Endothelial cell of umbilical vein (primary cell): ENCODE measurements at regions of chr1 and their contacts with region 1.

Region 1: DNA sequence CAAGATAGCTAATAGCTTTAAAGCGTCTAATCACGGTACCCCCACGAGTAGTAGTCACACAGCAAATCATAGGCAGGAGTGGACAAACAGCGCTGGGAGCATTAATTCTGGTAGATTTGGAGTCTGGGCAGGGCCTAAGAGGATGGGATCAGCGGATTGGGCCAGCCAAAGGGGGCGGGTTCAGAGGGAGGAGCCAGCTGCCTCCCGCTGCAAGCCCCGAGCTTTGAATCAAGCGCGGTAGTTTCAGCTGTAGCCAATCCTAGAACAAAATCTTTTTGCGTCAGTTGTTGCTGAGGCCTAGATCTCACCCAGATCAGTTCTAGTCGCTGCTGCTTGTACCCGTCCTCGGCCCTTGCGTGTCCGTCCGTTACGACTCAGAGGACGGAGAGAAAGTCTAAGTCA is 576 bp upstream of the NASP start:
- DNase-seq: peak; percentile 99
- H3K4me3 ChIP-seq: peak overlapping the region; percentile 62 to 81 (median 67)
- H3K27ac ChIP-seq: peak overlapping the region; percentile 78
- H3K4me1 ChIP-seq: peaks cover 17% of the 10 kb centered on the region
- H3K27me3 ChIP-seq: no peaks in the 10 kb centered on the region
- CTCF ChIP-seq: no peak
- POLR2A ChIP-seq: no peak

Region 2: DNA sequence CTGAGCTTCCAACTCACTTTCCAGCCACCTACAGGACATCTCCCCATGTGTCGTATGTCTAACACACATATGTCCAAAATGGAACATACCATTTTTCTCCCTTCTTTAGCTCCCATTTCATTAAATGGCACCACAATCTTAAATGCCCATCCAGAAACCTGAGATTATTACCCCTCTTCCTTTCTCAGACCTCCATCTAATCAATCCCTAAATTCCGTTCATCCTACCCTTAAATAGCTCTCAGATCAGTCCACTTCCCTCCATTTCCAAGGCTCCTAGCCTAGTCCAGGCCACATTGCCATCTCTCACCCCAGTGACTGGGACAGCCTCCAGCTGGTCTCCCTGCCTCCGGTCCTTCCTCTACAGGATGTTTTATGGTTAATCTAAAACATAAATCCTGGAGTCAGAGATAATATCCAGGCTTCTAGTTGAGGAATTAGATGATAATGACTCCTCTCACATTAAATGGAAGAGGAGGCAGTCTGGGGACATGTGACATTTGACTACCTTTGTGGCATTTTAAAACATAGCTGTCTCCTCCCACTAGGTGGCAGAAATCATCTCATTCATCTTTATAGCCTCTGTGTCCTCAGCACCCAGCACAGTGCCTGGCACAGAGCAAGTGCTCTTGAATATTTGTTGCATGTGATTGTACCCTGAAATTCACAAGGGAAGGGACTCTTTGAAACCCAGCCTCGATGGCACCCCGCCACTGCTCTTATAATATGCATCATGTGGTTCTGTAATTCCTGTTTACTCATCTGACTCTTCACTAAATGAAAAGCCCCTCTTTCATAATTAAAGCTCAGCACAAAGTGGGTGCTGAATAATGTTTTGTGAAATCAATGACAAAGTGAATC is 1011.3 kb before region 1 on chr1:
- CTCF ChIA-PET with region 1: no interaction called
- POLR2A ChIA-PET with region 1: no interaction called
- dilution Hi-C with region 1: no loop called
- intact Hi-C with region 1: no loop called
- DNase-seq: peak; percentile 8
- H3K4me3 ChIP-seq: no peak overlapping the region
- H3K27ac ChIP-seq: no peak overlapping the region
- H3K4me1 ChIP-seq: no peaks in the 10 kb centered on the region
- H3K27me3 ChIP-seq: peaks cover 9 to 10% of the 10 kb centered on the region in 2 experiments
- CTCF ChIP-seq: peak; percentile 35 to 41
- POLR2A ChIP-seq: no peak

Region 3: DNA sequence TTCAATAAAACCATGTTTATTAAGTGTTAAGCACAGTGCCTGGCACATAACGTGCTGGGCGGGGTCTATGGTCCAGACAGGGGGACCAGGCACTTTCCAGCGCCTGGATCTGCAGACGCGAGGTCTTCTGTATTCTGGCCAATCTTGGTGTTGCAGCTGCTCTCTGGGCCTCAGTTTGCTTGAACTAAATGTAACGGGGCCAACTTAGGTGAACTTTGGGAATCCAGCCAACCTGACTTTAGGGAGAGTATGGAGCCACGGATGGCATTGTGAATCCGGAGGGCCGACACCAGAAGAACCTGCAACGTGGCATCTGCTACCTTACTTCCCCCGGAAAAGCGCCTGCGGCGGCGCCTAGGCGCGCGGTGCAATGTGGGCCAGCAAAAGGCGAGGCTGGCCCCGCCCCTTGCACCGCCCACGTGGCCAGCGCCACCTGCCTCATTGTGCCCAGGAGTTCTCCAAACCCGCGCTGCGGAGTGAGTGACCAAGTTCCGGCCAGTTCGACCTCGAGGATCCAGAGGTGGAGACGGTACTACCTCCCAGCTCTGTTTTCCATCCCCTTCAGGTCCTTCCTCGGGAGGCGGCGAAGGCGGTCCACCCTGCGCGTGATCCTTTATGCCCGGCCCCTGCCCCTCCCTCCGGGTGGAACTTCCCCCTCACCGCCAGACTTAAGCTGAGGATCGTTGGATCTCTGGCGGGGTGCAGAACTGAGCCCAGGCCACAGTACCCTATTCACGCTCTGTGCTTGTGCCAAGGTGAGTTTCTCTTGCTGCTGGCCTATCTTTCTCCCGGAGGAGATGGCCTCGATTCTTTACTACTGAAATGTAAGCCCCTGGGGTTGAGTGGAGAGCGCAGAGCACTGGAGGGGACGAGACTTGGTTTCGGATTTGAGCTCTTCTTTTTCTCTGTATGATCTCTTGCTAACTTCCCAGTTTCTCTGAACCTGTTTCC is 32.6 kb before region 1 on chr1 and contains the start of gene AKR1A1:
- CTCF ChIA-PET with region 1: no interaction called
- POLR2A ChIA-PET with region 1: interaction called, 5 read pairs
- dilution Hi-C with region 1: no loop called
- intact Hi-C with region 1: loop called (anchors 1 kb)
- DNase-seq: peak; percentile 90
- H3K4me3 ChIP-seq: peak within 1 kb of the TSS; percentile 57 to 93 (median 80)
- H3K27ac ChIP-seq: peak within 1 kb of the TSS; percentile 49
- H3K4me1 ChIP-seq: peaks cover 13% of the 10 kb centered on the region
- H3K27me3 ChIP-seq: no peaks in the 10 kb centered on the region
- CTCF ChIP-seq: no peak
- POLR2A ChIP-seq: peak; percentile 96
- total RNA-seq, gene AKR1A1: 166 and 172 TPM in 2 replicates

Region 4: DNA sequence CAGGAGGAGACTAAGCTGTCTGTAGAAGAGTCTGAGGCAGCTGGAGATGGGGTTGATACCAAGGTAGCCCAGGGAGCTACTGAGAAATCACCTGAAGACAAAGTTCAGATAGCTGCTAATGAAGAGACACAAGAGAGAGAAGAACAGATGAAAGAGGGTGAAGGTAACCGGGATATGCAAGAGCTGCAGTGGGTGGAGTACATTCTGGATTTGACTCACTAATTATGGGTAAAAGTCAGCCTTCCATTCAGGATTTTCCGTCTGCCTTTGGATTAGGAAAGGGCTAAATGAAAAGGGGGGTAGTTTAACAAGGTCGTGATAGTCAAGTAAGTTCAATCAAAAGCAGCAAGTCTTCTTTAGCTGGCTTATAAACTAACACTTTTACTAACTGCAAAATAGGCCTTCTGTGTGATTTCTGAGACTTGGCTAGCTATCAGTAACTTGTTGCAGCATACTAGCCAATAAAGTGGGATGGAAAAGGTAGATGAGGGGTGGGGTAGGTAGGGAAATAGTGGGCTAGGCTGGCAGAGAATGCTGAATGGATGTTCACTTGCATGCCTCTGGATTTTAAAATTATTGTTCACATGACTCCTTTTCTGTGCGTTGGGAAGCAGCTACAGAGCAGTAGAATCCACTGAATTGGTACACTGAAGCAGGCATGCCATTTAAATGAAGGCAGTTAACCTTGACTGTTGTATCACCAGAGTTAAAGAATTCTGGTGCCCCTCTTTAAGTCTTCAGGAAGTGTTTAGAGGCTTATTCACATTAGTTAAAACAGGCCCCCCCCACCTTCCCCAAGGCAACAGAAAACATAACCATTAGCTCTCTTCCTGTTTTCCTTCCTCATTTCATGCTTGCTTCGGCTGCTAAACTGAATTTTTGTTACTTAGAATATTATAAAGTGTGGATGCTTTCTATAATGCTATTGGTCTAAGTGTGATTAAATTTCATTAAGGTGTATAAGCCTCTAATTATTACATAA is 25.2 kb after region 1 on chr1:
- CTCF ChIA-PET with region 1: interaction called, 6 read pairs
- POLR2A ChIA-PET with region 1: interaction called, 7 read pairs
- dilution Hi-C with region 1: no loop called
- intact Hi-C with region 1: loop called (anchors 1 kb)
- DNase-seq: peak; percentile 85
- H3K4me3 ChIP-seq: no peak overlapping the region
- H3K27ac ChIP-seq: peak overlapping the region; percentile 52
- H3K4me1 ChIP-seq: peaks cover 28% of the 10 kb centered on the region
- H3K27me3 ChIP-seq: no peaks in the 10 kb centered on the region
- CTCF ChIP-seq: no peak
- POLR2A ChIP-seq: no peak

Region 5: DNA sequence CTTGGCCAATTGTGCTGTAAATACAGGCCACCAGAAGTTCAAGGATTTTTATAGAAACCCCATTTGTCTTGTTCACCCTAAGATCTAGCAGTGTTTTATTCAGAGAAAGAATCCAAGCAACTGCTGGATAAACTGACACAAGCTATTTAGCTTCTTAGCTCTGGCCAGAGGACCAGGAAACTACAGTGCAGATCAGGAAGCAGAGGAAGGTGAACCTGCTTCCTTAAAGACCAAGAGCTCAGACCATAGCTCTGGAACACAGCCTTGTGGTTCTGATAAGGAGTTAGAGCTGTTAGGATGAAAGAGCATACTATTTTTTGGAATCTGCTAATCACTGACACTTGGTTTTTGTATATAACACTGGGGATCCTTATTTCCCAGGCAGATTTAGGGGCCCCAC is 45.8 kb after region 1 on chr1:
- CTCF ChIA-PET with region 1: interaction called, 18 read pairs
- POLR2A ChIA-PET with region 1: interaction called, 7 read pairs
- dilution Hi-C with region 1: no loop called
- intact Hi-C with region 1: no loop called
- DNase-seq: peak; percentile 82
- H3K4me3 ChIP-seq: no peak overlapping the region
- H3K27ac ChIP-seq: no peak overlapping the region
- H3K4me1 ChIP-seq: peaks cover 11% of the 10 kb centered on the region
- H3K27me3 ChIP-seq: no peaks in the 10 kb centered on the region
- CTCF ChIP-seq: no peak
- POLR2A ChIP-seq: no peak

Region 6: DNA sequence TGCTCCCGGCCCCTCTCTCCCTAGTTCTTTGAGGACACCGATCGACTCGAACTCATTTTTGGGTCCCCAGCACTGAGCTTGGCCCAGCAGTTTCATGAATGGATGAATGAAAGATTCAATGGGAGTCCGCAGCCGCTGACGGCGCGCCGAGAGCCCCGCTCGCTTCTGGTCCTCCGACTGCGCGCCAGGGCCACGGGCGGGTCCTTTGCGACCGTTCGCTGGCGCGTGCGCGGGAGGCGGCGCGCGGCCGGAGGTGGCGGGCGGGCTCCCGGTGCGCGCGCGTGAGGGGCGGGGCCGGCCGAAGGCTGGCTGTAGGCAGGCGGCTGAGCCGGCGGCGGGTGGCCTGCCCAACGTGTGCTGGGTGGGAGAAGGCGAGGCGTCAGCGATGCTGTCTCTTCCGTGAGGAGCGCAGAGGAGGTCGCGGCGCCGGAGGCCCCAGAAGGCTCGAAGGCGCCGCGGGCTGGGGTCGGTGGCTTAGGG is 220.1 kb after region 1 on chr1 and contains the start of gene MAST2:
- CTCF ChIA-PET with region 1: no interaction called
- POLR2A ChIA-PET with region 1: no interaction called
- dilution Hi-C with region 1: no loop called
- intact Hi-C with region 1: loop called (anchors 2 kb)
- DNase-seq: peak; percentile 88
- H3K4me3 ChIP-seq: peak within 1 kb of the TSS; percentile 78 to 98 (median 82)
- H3K27ac ChIP-seq: peak within 1 kb of the TSS; percentile 93
- H3K4me1 ChIP-seq: peaks cover 24% of the 10 kb centered on the region
- H3K27me3 ChIP-seq: no peaks in the 10 kb centered on the region
- CTCF ChIP-seq: no peak
- POLR2A ChIP-seq: peak; percentile 50
- total RNA-seq, gene MAST2: 33.8 and 41.2 TPM in 2 replicates